Breast epithelium (tissue), 4 donors: ENCODE measurements at regions of chr16 and their contacts with region 1.

Region 1: GRCh38 chr16:78800523-78800922 is 701.1 kb downstream of the WWOX start:
- DNase-seq: no peak
- H3K4me3 ChIP-seq: no peak overlapping the region
- H3K27ac ChIP-seq: no peak overlapping the region
- H3K4me1 ChIP-seq: no peaks in the 10 kb centered on the region
- H3K27me3 ChIP-seq: no peaks in the 10 kb centered on the region
- CTCF ChIP-seq: no peak
- POLR2A ChIP-seq: no peak

Region 2: GRCh38 chr16:78443542-78444364 is 356.8 kb before region 1 on chr16:
- intact Hi-C with region 1: loop called (anchors 5 kb)
- DNase-seq: no peak
- H3K4me3 ChIP-seq: no peak overlapping the region
- H3K27ac ChIP-seq: no peak overlapping the region
- H3K4me1 ChIP-seq: no peaks in the 10 kb centered on the region
- H3K27me3 ChIP-seq: no peaks in the 10 kb centered on the region
- CTCF ChIP-seq: no peak
- POLR2A ChIP-seq: no peak